ENCODE measurements at regions of chr3 and their contacts with region 1.

Region 1: DNA sequence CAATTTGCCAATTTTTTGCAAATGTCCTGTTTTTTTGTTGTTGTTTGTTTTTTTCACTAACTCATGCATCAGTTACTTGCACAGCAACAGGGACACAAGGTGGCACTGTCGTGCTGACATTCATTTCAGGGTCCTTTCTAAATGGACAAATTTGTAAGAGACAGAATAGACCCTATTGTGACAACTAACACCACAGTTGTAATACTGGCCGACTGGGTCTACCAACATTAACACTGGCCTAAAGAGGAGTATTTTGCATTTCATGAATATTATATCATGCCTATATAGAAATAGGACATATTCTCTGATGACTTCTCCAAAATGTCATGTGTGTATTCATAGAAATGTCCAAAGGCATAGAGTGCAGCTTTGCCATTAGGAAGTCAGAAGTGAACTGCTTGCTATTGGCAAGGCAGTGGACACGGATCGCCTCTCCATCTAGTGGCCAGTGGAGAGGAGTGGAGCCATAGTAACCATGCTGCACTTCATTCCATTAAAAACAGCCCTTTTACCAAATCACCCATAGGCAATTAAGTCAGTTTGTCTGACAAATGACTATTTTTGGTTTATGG is 54.8 kb downstream of the ZBTB20 start:
- DNase-seq: peak; percentile 65
- ATAC-seq: peak; percentile 99
- H3K4me3 ChIP-seq: no peak overlapping the region
- H3K27ac ChIP-seq: peak overlapping the region; percentile 3; the same call in 1 of the 2 replicates
- H3K4me1 ChIP-seq: peaks cover 2 to 9% of the 10 kb centered on the region in 2 experiments; a peak in 2 of 4 replicates
- H3K27me3 ChIP-seq: no peaks in the 10 kb centered on the region
- CTCF ChIP-seq: peak; percentile 65 to 81 (median 68)
- POLR2A ChIP-seq: no peak
- RAD21 ChIP-seq: peak; percentile 61

Region 2: GRCh38 chr3:114362815-114363214 is 729.5 kb before region 1 on chr3:
- CTCF ChIA-PET with region 1: no interaction called
- POLR2A ChIA-PET with region 1: no interaction called
- RAD21 ChIA-PET with region 1: no interaction called
- intact Hi-C with region 1: loop called (anchors 5 kb)
- DNase-seq: peak; percentile 33
- ATAC-seq: peak; percentile 80
- H3K4me3 ChIP-seq: no peak overlapping the region
- H3K27ac ChIP-seq: peak overlapping the region; percentile 41; the same call in 1 of the 2 replicates
- H3K4me1 ChIP-seq: peaks cover 20 to 28% of the 10 kb centered on the region in 2 experiments
- H3K27me3 ChIP-seq: no peaks in the 10 kb centered on the region
- CTCF ChIP-seq: peak; percentile 41 to 59 (median 43); a peak in 5 of 6 replicates
- POLR2A ChIP-seq: no peak
- RAD21 ChIP-seq: peak; percentile 72

Region 3: GRCh38 chr3:114383875-114384557 is 708.3 kb before region 1 on chr3:
- CTCF ChIA-PET with region 1: no interaction called
- POLR2A ChIA-PET with region 1: no interaction called
- RAD21 ChIA-PET with region 1: no interaction called
- intact Hi-C with region 1: loop called (anchors 2 kb)
- DNase-seq: peak; percentile 47
- ATAC-seq: peak; percentile 85
- H3K4me3 ChIP-seq: no peak overlapping the region
- H3K27ac ChIP-seq: peak overlapping the region; percentile 41; the same call in 1 of the 2 replicates
- H3K4me1 ChIP-seq: peaks cover 26 to 58% of the 10 kb centered on the region in 2 experiments
- H3K27me3 ChIP-seq: no peaks in the 10 kb centered on the region
- CTCF ChIP-seq: peak; percentile 52 to 95 (median 94); a peak in 5 of 6 replicates
- POLR2A ChIP-seq: no peak
- RAD21 ChIP-seq: peak; percentile 92

Region 4: DNA sequence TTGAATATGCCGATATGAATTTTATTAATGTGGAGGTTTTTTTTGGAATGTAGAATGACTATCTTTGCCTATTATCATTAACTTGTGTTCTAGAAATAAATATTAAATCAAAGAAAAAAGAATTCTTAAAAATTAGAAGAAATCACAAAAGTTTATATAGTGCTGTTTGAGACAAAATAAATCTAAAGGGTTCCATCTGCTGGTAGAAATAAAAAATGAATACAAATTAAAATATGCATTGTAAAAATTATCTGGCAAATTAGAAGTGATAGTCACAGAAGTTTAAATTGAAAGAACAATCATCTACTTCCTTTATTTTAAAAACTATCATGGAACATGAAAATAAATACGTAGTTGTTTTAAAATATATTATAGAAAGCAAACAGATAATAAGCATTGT is 77.5 kb after region 1 on chr3:
- CTCF ChIA-PET with region 1: interaction called, 6 read pairs
- POLR2A ChIA-PET with region 1: no interaction called
- RAD21 ChIA-PET with region 1: no interaction called
- intact Hi-C with region 1: loop called (anchors 1 kb)
- DNase-seq: no peak
- ATAC-seq: no peak
- H3K4me3 ChIP-seq: no peak overlapping the region
- H3K27ac ChIP-seq: no peak overlapping the region
- H3K4me1 ChIP-seq: no peaks in the 10 kb centered on the region
- H3K27me3 ChIP-seq: no peaks in the 10 kb centered on the region
- CTCF ChIP-seq: peak in 2 of 3 experiments; percentile 27 to 48; a peak in 2 of 6 replicates
- POLR2A ChIP-seq: no peak
- RAD21 ChIP-seq: peak; percentile 54

Region 5: DNA sequence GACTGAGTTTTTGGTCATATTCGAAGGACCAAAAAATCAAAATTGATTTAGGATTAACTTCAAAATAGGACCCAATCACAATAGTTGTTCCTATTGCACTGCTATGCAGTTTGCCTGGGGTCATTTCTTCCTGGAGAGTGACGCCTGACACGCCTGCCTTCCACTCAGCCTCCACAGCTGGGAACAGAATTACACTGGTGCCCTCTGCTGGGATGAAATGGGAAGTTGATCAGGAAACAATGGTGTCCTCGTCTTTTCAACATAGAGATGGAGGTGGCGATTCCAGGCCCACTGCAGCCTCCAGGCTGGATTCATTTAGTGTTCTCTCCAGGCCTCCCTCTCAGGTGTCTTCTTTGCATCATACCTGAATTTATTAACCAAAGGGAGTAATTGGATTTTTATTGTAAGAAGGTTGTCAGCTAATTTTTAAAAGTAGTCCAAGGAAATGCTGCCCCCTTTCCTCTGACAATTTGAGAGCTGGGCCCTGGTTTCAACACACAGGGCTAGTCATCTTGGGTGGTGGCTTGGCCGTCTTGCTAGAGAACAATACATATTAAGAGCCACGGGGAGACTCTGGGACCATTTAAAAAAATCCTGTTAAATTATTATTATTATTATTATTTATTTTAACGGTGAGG is 600.7 kb after region 1 on chr3:
- CTCF ChIA-PET with region 1: interaction called, 6 read pairs
- POLR2A ChIA-PET with region 1: no interaction called
- RAD21 ChIA-PET with region 1: no interaction called
- intact Hi-C with region 1: loop called (anchors 2 kb)
- DNase-seq: peak; percentile 68
- ATAC-seq: peak; percentile 96
- H3K4me3 ChIP-seq: no peak overlapping the region
- H3K27ac ChIP-seq: no peak overlapping the region
- H3K4me1 ChIP-seq: peaks cover 0 to 11% of the 10 kb centered on the region in 2 experiments; a peak in 2 of 4 replicates
- H3K27me3 ChIP-seq: no peaks in the 10 kb centered on the region
- CTCF ChIP-seq: peak; percentile 74 to 95 (median 86)
- POLR2A ChIP-seq: no peak
- RAD21 ChIP-seq: peak; percentile 96

Region 6: DNA sequence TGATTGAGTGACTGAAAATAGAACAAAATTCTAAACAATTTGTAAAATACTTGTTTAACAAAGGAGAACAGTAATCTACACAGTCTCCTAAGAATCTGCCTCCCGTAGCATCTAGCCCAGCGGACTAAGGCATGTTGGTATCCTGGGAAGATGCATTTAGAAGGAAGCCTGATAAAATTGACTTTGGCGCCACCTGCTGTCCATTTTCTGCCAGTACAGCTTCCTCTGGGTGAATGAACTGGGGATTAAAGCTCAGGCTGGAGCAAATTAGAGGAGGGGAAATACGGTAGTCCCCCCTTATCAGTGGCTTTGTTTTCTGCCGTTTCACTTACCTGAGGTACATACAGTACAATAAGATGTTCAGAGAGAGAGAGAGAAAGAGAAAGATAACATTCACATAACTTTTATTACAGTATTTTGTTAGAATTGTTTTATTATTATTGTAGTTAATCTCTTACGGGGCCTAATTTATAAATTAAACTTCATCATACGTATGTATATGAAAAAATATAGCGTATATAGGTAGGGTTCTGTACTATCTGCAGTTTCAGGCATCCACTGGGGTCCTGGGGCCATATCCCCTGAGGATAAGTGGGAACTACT is 722.6 kb after region 1 on chr3:
- CTCF ChIA-PET with region 1: interaction called, 5 read pairs
- POLR2A ChIA-PET with region 1: no interaction called
- RAD21 ChIA-PET with region 1: no interaction called
- intact Hi-C with region 1: loop called (anchors 1 kb)
- DNase-seq: peak; percentile 59
- ATAC-seq: peak; percentile 93
- H3K4me3 ChIP-seq: no peak overlapping the region
- H3K27ac ChIP-seq: no peak overlapping the region
- H3K4me1 ChIP-seq: no peaks in the 10 kb centered on the region
- H3K27me3 ChIP-seq: no peaks in the 10 kb centered on the region
- CTCF ChIP-seq: peak; percentile 71 to 94 (median 81); a peak in 5 of 6 replicates
- POLR2A ChIP-seq: no peak
- RAD21 ChIP-seq: peak; percentile 94

Region 7: GRCh38 chr3:115903843-115904242 is 811.5 kb after region 1 on chr3:
- CTCF ChIA-PET with region 1: no interaction called
- POLR2A ChIA-PET with region 1: no interaction called
- RAD21 ChIA-PET with region 1: no interaction called
- intact Hi-C with region 1: no loop called
- DNase-seq: no peak
- ATAC-seq: no peak
- H3K4me3 ChIP-seq: no peak overlapping the region
- H3K27ac ChIP-seq: no peak overlapping the region
- H3K4me1 ChIP-seq: no peaks in the 10 kb centered on the region
- H3K27me3 ChIP-seq: peaks cover 70% of the 10 kb centered on the region
- CTCF ChIP-seq: no peak
- POLR2A ChIP-seq: no peak
- RAD21 ChIP-seq: no peak